B cell (primary cell): ENCODE measurements at regions of chr5 and their contacts with region 1.

Region 1: GRCh38 chr5:14331386-14331781 is 188.2 kb downstream of the TRIO start:
- DNase-seq: peak; percentile 60
- ATAC-seq: peak; percentile 93
- H3K4me3 ChIP-seq: peak overlapping the region in 1 of 5 experiments; percentile 19
- H3K4me3 Mint-ChIP-seq: peak overlapping the region; percentile 73
- H3K27ac ChIP-seq: peak overlapping the region; percentile 50 to 55
- H3K27ac Mint-ChIP-seq: peak overlapping the region; percentile 66
- H3K4me1 ChIP-seq: peaks cover 49% of the 10 kb centered on the region in 2 donors
- H3K4me1 Mint-ChIP-seq: peaks cover 62% of the 10 kb centered on the region
- H3K27me3 ChIP-seq: no peaks in the 10 kb centered on the region
- H3K27me3 Mint-ChIP-seq: no peaks in the 10 kb centered on the region
- CTCF ChIP-seq: no peak

Region 2: DNA sequence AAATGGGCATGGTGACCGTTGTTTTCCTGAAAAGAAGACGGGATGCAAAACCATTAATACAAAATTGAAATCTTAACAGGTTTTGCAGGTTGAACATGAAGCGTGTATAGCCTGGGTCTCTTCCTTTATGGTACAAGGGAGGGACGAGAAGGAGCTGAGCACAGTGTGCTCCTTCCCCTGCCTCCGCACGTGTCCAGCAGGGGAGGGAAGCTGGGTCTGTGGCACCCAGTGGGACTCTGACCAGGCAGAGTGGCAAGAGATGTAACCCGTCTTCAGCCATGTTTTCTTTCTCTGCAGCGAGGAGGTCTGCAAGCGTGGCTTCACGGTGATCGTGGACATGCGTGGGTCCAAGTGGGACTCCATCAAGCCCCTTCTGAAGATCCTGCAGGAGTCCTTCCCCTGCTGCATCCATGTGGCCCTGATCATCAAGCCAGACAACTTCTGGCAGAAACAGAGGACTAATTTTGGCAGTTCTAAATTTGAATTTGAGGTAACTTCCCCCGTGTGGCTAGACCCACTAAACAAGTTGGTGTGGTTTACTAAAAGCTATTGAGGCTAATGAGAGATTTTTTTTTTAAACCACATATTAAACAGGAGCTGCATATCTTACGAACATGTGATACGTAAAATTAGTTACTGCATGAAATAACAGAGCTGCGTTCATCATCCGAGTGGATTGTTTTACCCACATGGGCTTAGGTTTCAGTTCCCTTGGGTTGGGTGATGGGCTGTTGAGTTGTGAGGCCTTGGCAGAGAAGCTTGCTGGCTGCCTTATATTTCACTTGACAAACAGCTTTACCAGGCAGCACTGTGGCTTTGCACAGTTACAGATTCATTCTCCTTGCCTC is 44.6 kb before region 1 on chr5:
- CTCF ChIA-PET with region 1: interaction called, 3 read pairs
- POLR2A ChIA-PET with region 1: no interaction called
- intact Hi-C with region 1: loop called (anchors 2 kb)
- DNase-seq: peak; percentile 84
- ATAC-seq: peak; percentile 94
- H3K4me3 ChIP-seq: no peak overlapping the region
- H3K4me3 Mint-ChIP-seq: peak overlapping the region; percentile 67
- H3K27ac ChIP-seq: peak overlapping the region; percentile 11 to 30
- H3K27ac Mint-ChIP-seq: peak overlapping the region; percentile 43
- H3K4me1 ChIP-seq: peaks cover 21 to 26% of the 10 kb centered on the region in 2 donors
- H3K4me1 Mint-ChIP-seq: peaks cover 32% of the 10 kb centered on the region
- H3K27me3 ChIP-seq: no peaks in the 10 kb centered on the region
- H3K27me3 Mint-ChIP-seq: no peaks in the 10 kb centered on the region
- CTCF ChIP-seq: no peak

Region 3: GRCh38 chr5:14342306-14342705 is 10.9 kb after region 1 on chr5:
- CTCF ChIA-PET with region 1: interaction called, 9 read pairs
- POLR2A ChIA-PET with region 1: interaction called, 6 read pairs
- intact Hi-C with region 1: loop called (anchors 1 kb)
- DNase-seq: peak; percentile 62
- ATAC-seq: peak; percentile 95
- H3K4me3 ChIP-seq: peak overlapping the region in 3 of 5 experiments; percentile 2 to 31 (median 3)
- H3K4me3 Mint-ChIP-seq: peak overlapping the region; percentile 70
- H3K27ac ChIP-seq: peak overlapping the region; percentile 45 to 59
- H3K27ac Mint-ChIP-seq: peak overlapping the region; percentile 82
- H3K4me1 ChIP-seq: peaks cover 33 to 38% of the 10 kb centered on the region in 2 donors
- H3K4me1 Mint-ChIP-seq: peaks cover 46% of the 10 kb centered on the region
- H3K27me3 ChIP-seq: no peaks in the 10 kb centered on the region
- H3K27me3 Mint-ChIP-seq: no peaks in the 10 kb centered on the region
- CTCF ChIP-seq: no peak

Region 4: GRCh38 chr5:14351845-14352712 is 20.7 kb after region 1 on chr5:
- CTCF ChIA-PET with region 1: interaction called, 36 read pairs
- POLR2A ChIA-PET with region 1: no interaction called
- intact Hi-C with region 1: no loop called
- DNase-seq: peak; percentile 72
- ATAC-seq: peak; percentile 93
- H3K4me3 ChIP-seq: no peak overlapping the region
- H3K4me3 Mint-ChIP-seq: no peak overlapping the region
- H3K27ac ChIP-seq: no peak overlapping the region
- H3K27ac Mint-ChIP-seq: peak overlapping the region; percentile 68
- H3K4me1 ChIP-seq: peaks cover 9 to 21% of the 10 kb centered on the region in 2 donors
- H3K4me1 Mint-ChIP-seq: peaks cover 32% of the 10 kb centered on the region
- H3K27me3 ChIP-seq: no peaks in the 10 kb centered on the region
- H3K27me3 Mint-ChIP-seq: no peaks in the 10 kb centered on the region
- CTCF ChIP-seq: peak; percentile 96